Ovary (tissue), 10 donors: ENCODE measurements at regions of chrX and their contacts with region 1.

Region 1: GRCh38 chrX:129726307-129727111 is 12.3 kb upstream of the XPNPEP2 start:
- DNase-seq: peak; percentile 35 to 71 (median 64)
- H3K4me3 ChIP-seq: no peak overlapping the region
- H3K27ac ChIP-seq: no peak overlapping the region
- H3K4me1 ChIP-seq: no peaks in the 10 kb centered on the region
- H3K27me3 ChIP-seq: no peaks in the 10 kb centered on the region
- CTCF ChIP-seq: peak; percentile 23 to 61 (median 51)
- EP300 ChIP-seq: no peak
- POLR2A ChIP-seq: no peak

Region 2: DNA sequence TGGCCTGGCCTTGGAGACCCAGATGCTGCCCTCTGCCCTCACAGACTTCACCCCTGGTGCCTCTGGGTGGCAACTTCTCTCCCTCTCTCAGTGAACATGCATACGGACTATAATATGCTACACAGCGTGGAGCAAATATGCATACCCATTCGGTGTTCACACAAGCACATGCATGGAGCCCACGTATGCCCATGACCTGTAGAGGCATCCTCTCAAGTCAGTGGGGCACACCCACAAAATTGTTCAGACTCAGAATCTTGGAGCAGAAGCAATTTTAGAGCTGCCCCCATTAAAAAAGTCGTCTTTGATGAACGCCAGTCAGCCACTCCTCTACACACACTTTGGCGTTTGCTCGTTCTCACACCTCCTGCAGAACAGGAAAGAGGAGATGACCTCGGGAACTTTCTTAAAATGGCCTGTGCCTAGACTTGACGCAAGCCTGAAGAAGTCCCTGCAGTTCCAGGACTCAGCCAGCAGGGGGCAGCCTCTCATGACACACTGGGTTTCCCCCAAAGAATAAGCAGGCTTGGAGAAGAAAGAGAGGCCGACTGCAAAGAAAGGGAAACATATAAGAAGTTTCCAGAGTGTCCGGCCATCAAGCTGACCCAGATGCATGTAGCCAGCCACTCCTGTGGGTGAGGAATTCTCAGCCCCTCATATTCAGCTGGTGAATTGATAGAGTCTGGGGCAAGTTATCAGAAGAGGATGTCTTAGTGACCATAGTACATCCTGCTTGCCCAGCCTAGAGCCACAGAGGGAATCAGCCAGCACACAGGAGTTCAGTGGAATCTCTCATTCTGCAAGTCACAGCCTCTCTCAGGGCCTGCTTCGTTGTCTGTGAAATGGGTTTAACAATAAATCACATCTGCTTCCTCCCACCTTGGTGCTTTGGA is 89.0 kb before region 1 on chrX:
- intact Hi-C with region 1: loop called (anchors 5 to 10 kb)
- DNase-seq: peak; percentile 42 to 78 (median 75)
- H3K4me3 ChIP-seq: no peak overlapping the region
- H3K27ac ChIP-seq: no peak overlapping the region
- H3K4me1 ChIP-seq: no peaks in the 10 kb centered on the region
- H3K27me3 ChIP-seq: no peaks in the 10 kb centered on the region
- CTCF ChIP-seq: peak; percentile 66 to 78 (median 74)
- EP300 ChIP-seq: no peak
- POLR2A ChIP-seq: no peak